ENCODE measurements at regions of chr17 and their contacts with region 1.

Region 1: DNA sequence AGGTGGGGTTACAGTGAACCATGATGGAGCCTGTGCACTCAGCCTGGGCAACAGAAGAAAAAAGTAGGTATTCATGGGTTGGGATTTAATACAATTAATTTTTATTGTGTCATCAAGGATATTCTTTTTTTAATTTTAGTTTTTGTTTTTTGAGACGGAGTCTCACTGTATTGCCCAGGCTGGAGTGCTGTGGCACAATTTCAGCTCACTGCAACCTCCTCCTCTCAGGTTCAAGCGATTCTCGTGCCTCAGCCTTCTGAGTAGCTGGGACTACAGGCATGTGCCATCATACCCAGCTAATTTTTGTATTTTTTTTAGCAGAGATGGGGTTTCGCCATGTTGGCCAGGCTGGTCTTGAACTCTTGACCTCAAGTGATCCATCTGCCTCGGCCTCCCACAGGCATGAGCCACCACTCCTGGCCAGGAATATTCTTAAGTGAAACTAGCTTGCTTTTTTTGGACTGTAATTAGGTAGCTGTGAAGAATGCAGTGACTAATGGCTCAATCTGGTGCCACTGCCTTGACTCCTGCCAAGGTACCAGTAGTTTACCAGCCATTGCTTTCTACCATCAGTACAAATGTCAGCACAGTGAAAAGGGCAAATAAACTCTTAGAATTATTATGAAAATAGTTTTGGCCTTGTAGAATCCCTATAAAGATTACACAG is 4.8 kb downstream of the PPM1D start:
- DNase-seq: no peak
- H3K4me3 Mint-ChIP-seq: no peak overlapping the region
- H3K27ac Mint-ChIP-seq: no peak overlapping the region
- H3K4me1 Mint-ChIP-seq: peaks cover 9% of the 10 kb centered on the region
- H3K27me3 Mint-ChIP-seq: no peaks in the 10 kb centered on the region
- CTCF ChIP-seq: no peak

Region 2: GRCh38 chr17:60639019-60639330 is 34.2 kb after region 1 on chr17:
- CTCF ChIA-PET with region 1: no interaction called
- intact Hi-C with region 1: loop called (anchors 2 kb)
- DNase-seq: no peak
- H3K4me3 Mint-ChIP-seq: no peak overlapping the region
- H3K27ac Mint-ChIP-seq: no peak overlapping the region
- H3K4me1 Mint-ChIP-seq: no peaks in the 10 kb centered on the region
- H3K27me3 Mint-ChIP-seq: no peaks in the 10 kb centered on the region
- CTCF ChIP-seq: no peak

Region 3: DNA sequence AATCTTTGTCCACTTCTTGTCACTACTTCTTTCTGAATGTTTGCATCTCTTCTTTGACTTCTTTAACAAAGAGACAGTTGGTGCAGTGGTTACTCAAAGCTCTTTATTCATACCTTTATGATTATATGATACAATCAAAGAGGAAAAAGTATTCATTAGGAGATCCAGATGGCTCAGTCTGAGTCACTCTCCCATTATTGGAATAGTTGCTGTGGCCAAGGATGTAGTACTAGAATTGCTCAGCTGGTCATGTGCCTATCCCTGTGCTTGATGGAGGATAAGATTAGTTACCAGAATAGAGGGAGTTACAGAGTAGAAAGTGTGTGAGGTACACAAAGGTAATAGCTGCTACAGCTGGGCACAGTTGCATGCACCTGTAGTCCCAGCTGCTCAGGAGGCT is 91.1 kb after region 1 on chr17:
- CTCF ChIA-PET with region 1: no interaction called
- intact Hi-C with region 1: no loop called
- DNase-seq: no peak
- H3K4me3 Mint-ChIP-seq: no peak overlapping the region
- H3K27ac Mint-ChIP-seq: no peak overlapping the region
- H3K4me1 Mint-ChIP-seq: no peaks in the 10 kb centered on the region
- H3K27me3 Mint-ChIP-seq: no peaks in the 10 kb centered on the region
- CTCF ChIP-seq: no peak

Region 4: GRCh38 chr17:60864708-60865005 is 259.8 kb after region 1 on chr17:
- CTCF ChIA-PET with region 1: no interaction called
- intact Hi-C with region 1: no loop called
- DNase-seq: no peak
- H3K4me3 Mint-ChIP-seq: no peak overlapping the region
- H3K27ac Mint-ChIP-seq: no peak overlapping the region
- H3K4me1 Mint-ChIP-seq: no peaks in the 10 kb centered on the region
- H3K27me3 Mint-ChIP-seq: no peaks in the 10 kb centered on the region
- CTCF ChIP-seq: no peak

Measured in Calu3 (cell line).